Mammary epithelial cell (primary cell): ENCODE measurements at regions of chr18 and their contacts with region 1.

Region 1: DNA sequence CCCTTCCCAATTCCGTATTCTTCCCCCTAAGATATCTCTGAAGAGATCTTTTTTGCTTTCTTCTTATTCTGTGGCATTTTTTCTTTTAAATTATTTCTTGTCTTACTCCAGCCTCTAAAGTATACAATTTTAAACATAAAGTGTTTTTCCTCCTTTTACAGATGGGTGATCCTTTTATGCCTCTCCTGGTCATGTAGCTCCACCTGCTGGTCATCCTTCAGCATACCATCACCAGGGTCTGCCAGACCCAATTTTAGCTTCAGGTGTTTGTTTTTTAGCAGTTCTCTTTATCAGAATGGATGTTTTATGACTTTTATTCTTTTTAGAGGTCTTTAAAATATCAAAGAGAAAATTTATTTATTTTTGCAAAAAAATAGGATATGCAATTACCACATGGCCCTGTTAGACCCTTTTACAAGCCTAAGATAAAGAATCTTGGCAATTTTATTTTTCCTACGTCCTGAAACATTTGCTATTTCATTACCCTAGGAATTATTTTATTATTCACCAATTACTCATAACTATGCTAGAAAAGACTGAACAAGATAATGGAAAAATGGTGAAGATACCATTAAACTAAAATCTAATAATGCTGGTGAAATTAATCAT is 55.5 kb downstream of the PIGN start:
- DNase-seq: peak; percentile 29
- H3K4me3 ChIP-seq: no peak overlapping the region
- H3K27ac ChIP-seq: no peak overlapping the region
- H3K4me1 ChIP-seq: peaks cover 2% of the 10 kb centered on the region
- H3K27me3 ChIP-seq: no peaks in the 10 kb centered on the region
- CTCF ChIP-seq: peak; percentile 93 to 96

Region 2: DNA sequence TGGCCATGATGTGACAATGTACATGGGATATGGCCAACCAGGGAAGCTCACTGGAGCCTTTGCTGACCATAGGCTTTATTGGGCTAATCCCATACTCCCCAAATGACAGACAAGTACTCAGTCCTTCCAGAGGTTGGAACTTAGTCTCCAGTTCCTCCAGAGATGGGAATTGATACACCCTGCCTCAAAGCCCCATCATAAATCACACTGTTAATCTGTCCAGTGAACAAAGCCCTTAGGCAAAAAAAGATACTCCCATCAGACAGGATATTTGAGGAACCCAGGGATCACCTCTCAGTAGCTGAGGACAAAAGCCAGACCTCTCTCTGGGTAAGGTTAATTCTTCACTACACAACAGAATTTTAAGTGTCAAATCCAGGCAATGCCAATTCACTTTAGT is 1045.6 kb before region 1 on chr18:
- CTCF ChIA-PET with region 1: no interaction called
- dilution Hi-C with region 1: no loop called
- in situ Hi-C with region 1: no loop called
- intact Hi-C with region 1: loop called (anchors 5 kb)
- DNase-seq: no peak
- H3K4me3 ChIP-seq: no peak overlapping the region
- H3K27ac ChIP-seq: no peak overlapping the region
- H3K4me1 ChIP-seq: no peaks in the 10 kb centered on the region
- H3K27me3 ChIP-seq: no peaks in the 10 kb centered on the region
- CTCF ChIP-seq: peak in 1 of 2 donors; percentile 14

Region 3: DNA sequence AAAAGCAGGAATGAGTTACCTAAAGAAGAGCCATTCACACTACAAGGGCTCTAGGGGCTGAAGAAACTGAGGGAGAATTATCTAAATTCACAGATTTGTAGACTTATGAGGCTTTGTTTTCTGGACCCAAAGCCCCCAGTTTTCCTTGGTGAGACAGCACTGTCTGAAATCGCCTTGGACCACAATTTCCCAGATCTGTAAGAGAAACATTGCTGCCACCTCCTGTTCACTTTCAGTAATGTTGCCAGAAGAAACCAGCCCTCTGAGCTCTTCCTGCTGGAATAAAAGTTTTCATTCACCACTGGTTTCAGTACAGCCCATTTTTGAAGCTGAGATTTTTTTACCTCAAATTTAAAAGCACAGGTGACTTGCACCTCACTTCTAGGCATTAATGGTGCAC is 628.9 kb before region 1 on chr18:
- CTCF ChIA-PET with region 1: interaction called, 5 read pairs
- dilution Hi-C with region 1: no loop called
- in situ Hi-C with region 1: no loop called
- intact Hi-C with region 1: loop called (anchors 2 kb)
- DNase-seq: peak; percentile 32
- H3K4me3 ChIP-seq: no peak overlapping the region
- H3K27ac ChIP-seq: no peak overlapping the region
- H3K4me1 ChIP-seq: no peaks in the 10 kb centered on the region
- H3K27me3 ChIP-seq: no peaks in the 10 kb centered on the region
- CTCF ChIP-seq: peak; percentile 64 to 79

Region 4: GRCh38 chr18:61575419-61575818 is 556.0 kb before region 1 on chr18:
- CTCF ChIA-PET with region 1: no interaction called
- dilution Hi-C with region 1: no loop called
- in situ Hi-C with region 1: loop called (anchors 10 to 25 kb)
- intact Hi-C with region 1: no loop called
- DNase-seq: no peak
- H3K4me3 ChIP-seq: no peak overlapping the region
- H3K27ac ChIP-seq: no peak overlapping the region
- H3K4me1 ChIP-seq: no peaks in the 10 kb centered on the region
- H3K27me3 ChIP-seq: no peaks in the 10 kb centered on the region
- CTCF ChIP-seq: no peak

Region 5: GRCh38 chr18:61635901-61636528 is 495.4 kb before region 1 on chr18:
- CTCF ChIA-PET with region 1: no interaction called
- dilution Hi-C with region 1: no loop called
- in situ Hi-C with region 1: no loop called
- intact Hi-C with region 1: loop called (anchors 1 kb)
- DNase-seq: peak; percentile 45
- H3K4me3 ChIP-seq: no peak overlapping the region
- H3K27ac ChIP-seq: no peak overlapping the region
- H3K4me1 ChIP-seq: peaks cover 3% of the 10 kb centered on the region
- H3K27me3 ChIP-seq: no peaks in the 10 kb centered on the region
- CTCF ChIP-seq: peak; percentile 80 to 81

Region 6: GRCh38 chr18:61949946-61950345 is 181.5 kb before region 1 on chr18:
- CTCF ChIA-PET with region 1: no interaction called
- dilution Hi-C with region 1: no loop called
- in situ Hi-C with region 1: no loop called
- intact Hi-C with region 1: loop called (anchors 5 kb)
- DNase-seq: peak; percentile 100
- H3K4me3 ChIP-seq: peak overlapping the region; percentile 43 to 55 (median 47)
- H3K27ac ChIP-seq: peak overlapping the region; percentile 99
- H3K4me1 ChIP-seq: peaks cover 60% of the 10 kb centered on the region
- H3K27me3 ChIP-seq: no peaks in the 10 kb centered on the region
- CTCF ChIP-seq: no peak

Region 7: DNA sequence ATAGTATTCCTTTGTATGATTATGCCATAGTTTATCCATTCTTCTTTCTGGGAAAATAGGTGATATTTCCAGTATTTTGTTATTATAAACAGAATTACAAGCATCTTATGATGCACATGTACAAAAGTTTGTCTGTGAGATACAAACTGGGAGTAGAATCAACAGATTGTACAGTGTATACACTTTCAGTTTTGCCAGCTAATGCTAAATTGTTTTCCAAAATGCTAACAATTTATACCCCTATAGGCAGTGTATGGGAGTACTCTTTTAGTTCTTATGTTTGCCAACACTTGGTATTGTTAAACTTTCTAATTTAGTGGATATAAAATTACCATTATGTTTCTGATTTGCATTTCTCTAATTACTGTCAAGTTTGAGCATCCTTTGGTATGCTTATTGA is 162.7 kb after region 1 on chr18:
- CTCF ChIA-PET with region 1: no interaction called
- dilution Hi-C with region 1: no loop called
- in situ Hi-C with region 1: no loop called
- intact Hi-C with region 1: no loop called
- DNase-seq: no peak
- H3K4me3 ChIP-seq: no peak overlapping the region
- H3K27ac ChIP-seq: no peak overlapping the region
- H3K4me1 ChIP-seq: no peaks in the 10 kb centered on the region
- H3K27me3 ChIP-seq: no peaks in the 10 kb centered on the region
- CTCF ChIP-seq: no peak

Region 8: GRCh38 chr18:63177919-63178821 is 1046.8 kb after region 1 on chr18:
- CTCF ChIA-PET with region 1: no interaction called
- dilution Hi-C with region 1: no loop called
- in situ Hi-C with region 1: no loop called
- intact Hi-C with region 1: no loop called
- DNase-seq: no peak
- H3K4me3 ChIP-seq: no peak overlapping the region
- H3K27ac ChIP-seq: no peak overlapping the region
- H3K4me1 ChIP-seq: no peaks in the 10 kb centered on the region
- H3K27me3 ChIP-seq: peaks cover 7% of the 10 kb centered on the region
- CTCF ChIP-seq: no peak